ENCODE measurements at regions of chr11 and their contacts with region 1.

Region 1: DNA sequence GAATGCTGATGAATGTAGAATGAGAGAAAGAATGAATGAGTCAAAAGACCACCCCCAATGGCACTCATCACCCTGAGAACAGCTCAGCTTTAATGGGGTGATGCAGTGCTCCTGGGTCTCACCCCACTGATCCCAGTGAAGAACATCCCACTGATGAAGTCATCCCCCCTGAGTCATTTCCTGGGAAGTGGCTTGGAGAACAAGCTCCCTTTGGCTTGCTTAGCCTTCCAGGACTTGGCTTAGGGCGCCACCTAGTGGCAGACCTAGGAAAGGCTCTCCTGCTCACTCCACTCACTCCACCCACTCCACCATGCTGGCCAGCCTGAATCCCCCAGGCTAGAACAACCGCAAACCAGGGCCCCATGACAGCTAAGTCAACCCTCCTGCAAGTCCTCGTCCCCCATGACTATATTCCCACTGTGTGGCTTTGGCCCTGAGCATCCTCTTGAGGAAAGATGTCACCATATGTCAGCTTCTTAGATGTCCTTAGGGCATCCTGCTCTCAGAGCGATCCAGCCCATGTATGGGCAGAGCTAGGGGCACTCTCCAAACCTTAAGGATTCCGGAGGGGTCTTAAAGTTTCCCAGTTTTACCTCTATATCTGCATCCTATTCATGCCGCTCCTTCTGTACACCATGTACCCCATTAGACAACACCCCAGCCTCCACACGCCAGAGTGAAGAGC is 17.8 kb upstream of the TMPRSS13 start:
- DNase-seq: peak; percentile 57 to 86 (median 76)
- ATAC-seq: peak; percentile 64
- H3K4me3 ChIP-seq: no peak overlapping the region
- H3K4me3 Mint-ChIP-seq: peak overlapping the region in 9 of 10 donors; percentile 1 to 79 (median 58)
- H3K27ac ChIP-seq: no peak overlapping the region
- H3K27ac Mint-ChIP-seq: peak overlapping the region; percentile 30 to 91 (median 82)
- H3K4me1 ChIP-seq: peaks cover 49 to 51% of the 10 kb centered on the region in 2 donors
- H3K4me1 Mint-ChIP-seq: peaks cover 50 to 83% (median 60%) of the 10 kb centered on the region in 7 donors
- H3K27me3 ChIP-seq: no peaks in the 10 kb centered on the region
- H3K27me3 Mint-ChIP-seq: no peaks in the 10 kb centered on the region

Region 2: GRCh38 chr11:117426269-117426685 is 520.7 kb before region 1 on chr11:
- CTCF ChIA-PET with region 1: interaction called, 11 read pairs
- POLR2A ChIA-PET with region 1: no interaction called
- intact Hi-C with region 1: loop called in 1 of 2 experiments (anchors 10 kb)
- DNase-seq: peak; percentile 7 to 77 (median 48)
- ATAC-seq: peak; percentile 73
- H3K4me3 ChIP-seq: no peak overlapping the region
- H3K4me3 Mint-ChIP-seq: peak overlapping the region in 5 of 10 donors; percentile 20 to 53 (median 42)
- H3K27ac ChIP-seq: no peak overlapping the region
- H3K27ac Mint-ChIP-seq: no peak overlapping the region
- H3K4me1 ChIP-seq: no peaks in the 10 kb centered on the region
- H3K4me1 Mint-ChIP-seq: peaks cover 0 to 13% (median 10%) of the 10 kb centered on the region in 7 donors
- H3K27me3 ChIP-seq: no peaks in the 10 kb centered on the region
- H3K27me3 Mint-ChIP-seq: peaks cover 0 to 15% (median 3%) of the 10 kb centered on the region in 5 donors

Region 3: DNA sequence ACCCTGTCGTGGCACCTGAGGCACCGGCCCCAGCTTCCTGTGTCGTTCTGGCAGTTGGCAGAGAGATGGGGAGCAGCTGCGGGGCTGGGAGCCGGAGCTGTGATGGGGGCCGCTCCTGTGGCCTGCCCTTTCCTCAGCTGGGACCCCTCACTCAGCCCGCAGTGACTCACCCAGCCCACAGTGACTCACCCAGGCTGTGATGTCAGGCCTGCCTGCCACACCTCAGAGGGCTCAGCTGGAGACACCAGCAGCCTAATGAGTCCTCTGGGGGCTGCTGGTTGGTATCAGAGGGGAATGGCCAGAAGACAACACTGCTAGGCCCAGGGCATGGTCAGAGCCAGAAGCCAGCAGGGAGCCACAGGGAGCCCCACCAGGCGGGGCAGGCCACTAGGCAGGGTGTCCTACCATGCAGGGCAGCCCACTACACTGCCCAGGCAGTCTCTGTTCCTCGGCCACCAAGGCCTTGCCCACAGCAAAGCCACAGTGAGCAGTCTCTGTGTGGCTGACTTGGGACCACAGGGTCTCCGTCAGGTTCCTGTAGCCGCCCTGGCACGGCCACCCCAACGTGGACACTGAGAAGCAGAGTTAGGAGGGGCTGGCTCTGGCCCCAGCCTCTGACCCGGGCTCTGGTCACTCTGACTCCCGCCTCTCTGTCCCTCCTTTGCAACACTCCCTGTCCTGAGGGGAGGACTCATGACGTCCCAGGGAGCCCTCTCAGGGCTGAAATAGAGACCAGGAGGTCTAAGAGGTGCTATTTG is 118.2 kb before region 1 on chr11:
- CTCF ChIA-PET with region 1: interaction called, 138 read pairs
- POLR2A ChIA-PET with region 1: interaction called, 7 read pairs
- intact Hi-C with region 1: loop called (anchors 1 kb)
- DNase-seq: peak in 6 of 9 donors; percentile 19 to 82 (median 24)
- ATAC-seq: peak; percentile 88
- H3K4me3 ChIP-seq: no peak overlapping the region
- H3K4me3 Mint-ChIP-seq: peak overlapping the region in 7 of 10 donors; percentile 16 to 79 (median 48)
- H3K27ac ChIP-seq: peak overlapping the region; percentile 35
- H3K27ac Mint-ChIP-seq: peak overlapping the region in 6 of 9 donors; percentile 16 to 87 (median 60)
- H3K4me1 ChIP-seq: peaks cover 38 to 47% of the 10 kb centered on the region in 2 donors
- H3K4me1 Mint-ChIP-seq: peaks cover 48 to 72% (median 50%) of the 10 kb centered on the region in 7 donors
- H3K27me3 ChIP-seq: no peaks in the 10 kb centered on the region
- H3K27me3 Mint-ChIP-seq: peaks cover 0 to 2% (median 0%) of the 10 kb centered on the region in 5 donors

Region 4: DNA sequence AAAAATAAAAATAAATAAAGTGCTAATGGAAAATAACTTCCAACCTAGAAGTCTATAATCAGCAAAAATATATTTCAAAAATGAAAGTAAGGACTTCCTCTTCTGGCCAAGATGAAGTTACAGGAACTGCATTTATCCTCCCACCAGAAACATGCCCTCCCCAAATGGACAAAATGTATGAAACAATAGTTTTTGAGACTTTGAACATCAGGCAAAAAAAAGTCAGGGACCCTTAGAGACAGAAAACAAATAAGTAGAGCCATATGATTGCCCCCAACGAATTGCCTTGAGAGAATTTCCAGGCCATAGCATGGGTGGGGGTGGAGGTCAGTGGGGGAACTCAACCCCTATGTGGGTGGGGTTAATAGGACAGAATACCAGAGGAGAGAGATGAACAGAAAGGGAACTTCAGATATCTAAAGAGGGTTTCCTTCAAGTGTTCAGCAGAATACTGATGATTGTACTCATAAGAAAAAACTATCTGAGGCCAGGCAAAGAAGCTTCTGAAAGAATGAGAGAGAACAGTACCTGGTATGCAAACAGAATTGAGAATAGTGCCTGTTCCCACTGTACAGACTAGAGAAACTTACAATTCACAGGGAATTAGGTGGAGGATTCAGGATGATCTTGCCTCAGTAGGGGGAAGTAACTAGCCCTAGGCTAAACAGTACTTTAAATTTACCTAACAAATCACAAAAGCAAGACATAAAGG is 12.6 kb after region 1 on chr11:
- CTCF ChIA-PET with region 1: interaction called, 6 read pairs
- POLR2A ChIA-PET with region 1: interaction called, 15 read pairs
- intact Hi-C with region 1: loop called in 1 of 2 experiments (anchors 1 kb)
- DNase-seq: no peak
- ATAC-seq: no peak
- H3K4me3 ChIP-seq: no peak overlapping the region
- H3K4me3 Mint-ChIP-seq: peak overlapping the region in 4 of 10 donors; percentile 12 to 67 (median 42)
- H3K27ac ChIP-seq: no peak overlapping the region
- H3K27ac Mint-ChIP-seq: peak overlapping the region in 3 of 9 donors; percentile 38 to 85 (median 84)
- H3K4me1 ChIP-seq: peaks cover 9 to 10% of the 10 kb centered on the region in 2 donors
- H3K4me1 Mint-ChIP-seq: peaks cover 31 to 76% (median 71%) of the 10 kb centered on the region in 7 donors
- H3K27me3 ChIP-seq: no peaks in the 10 kb centered on the region
- H3K27me3 Mint-ChIP-seq: no peaks in the 10 kb centered on the region

Region 5: DNA sequence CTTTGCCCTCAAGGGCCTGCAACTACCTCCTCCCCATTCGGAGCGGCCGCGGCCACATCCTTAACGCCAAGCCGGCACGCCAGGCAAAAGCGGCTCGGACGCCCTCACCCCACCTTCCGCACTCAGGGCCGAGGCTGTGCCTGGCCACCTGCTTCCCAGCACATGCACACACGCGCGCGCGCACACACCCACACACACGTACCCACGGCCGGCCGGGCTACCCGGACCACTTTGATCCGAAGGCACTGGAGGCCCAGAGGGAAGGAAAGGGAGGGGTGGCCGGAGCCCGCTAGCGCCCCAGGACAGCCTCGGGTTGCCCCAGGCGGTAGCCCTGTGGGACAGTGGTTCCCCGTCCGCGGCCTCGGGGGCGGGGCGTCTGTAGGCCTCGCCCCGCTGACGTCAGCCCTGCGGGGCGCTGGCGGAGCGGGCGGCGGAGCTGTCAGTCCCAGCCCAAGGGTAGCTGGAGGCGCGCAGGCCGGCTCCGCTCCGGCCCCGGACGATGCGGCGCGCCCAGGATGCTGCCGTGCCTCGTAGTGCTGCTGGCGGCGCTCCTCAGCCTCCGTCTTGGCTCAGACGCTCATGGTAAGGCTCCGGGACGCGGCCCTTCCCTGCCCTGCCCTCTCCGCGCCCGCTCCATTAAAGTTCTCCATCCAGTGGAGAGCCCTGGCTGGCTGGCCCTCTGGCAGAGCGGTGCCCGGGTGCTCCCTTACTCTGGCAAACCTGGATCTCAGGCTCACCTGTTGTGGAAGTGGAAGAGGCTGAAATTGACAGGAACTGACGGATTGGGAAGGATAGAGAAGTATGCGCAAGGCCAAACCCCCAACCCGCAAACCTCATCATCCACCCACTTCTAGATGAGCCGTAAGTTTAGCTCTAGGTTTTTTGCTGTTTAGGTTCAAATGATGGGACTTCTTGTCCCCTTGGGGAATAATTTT is 39.2 kb after region 1 on chr11 and contains the start of gene IL10RA:
- CTCF ChIA-PET with region 1: interaction called, 70 read pairs
- POLR2A ChIA-PET with region 1: interaction called, 302 read pairs
- intact Hi-C with region 1: loop called (anchors 1 kb)
- DNase-seq: peak; percentile 72 to 95 (median 80)
- ATAC-seq: peak; percentile 92
- H3K4me3 ChIP-seq: peak within 1 kb of the TSS; percentile 97
- H3K4me3 Mint-ChIP-seq: peak within 1 kb of the TSS; percentile 84 to 97 (median 91)
- H3K27ac ChIP-seq: peak within 1 kb of the TSS; percentile 91
- H3K27ac Mint-ChIP-seq: peak within 1 kb of the TSS; percentile 87 to 98 (median 92)
- H3K4me1 ChIP-seq: peaks cover 43 to 45% of the 10 kb centered on the region in 2 donors
- H3K4me1 Mint-ChIP-seq: peaks cover 44 to 78% (median 69%) of the 10 kb centered on the region in 7 donors
- H3K27me3 ChIP-seq: no peaks in the 10 kb centered on the region
- H3K27me3 Mint-ChIP-seq: no peaks in the 10 kb centered on the region
- total RNA-seq, gene IL10RA: 154 to 300 (median 184) TPM

Region 6: DNA sequence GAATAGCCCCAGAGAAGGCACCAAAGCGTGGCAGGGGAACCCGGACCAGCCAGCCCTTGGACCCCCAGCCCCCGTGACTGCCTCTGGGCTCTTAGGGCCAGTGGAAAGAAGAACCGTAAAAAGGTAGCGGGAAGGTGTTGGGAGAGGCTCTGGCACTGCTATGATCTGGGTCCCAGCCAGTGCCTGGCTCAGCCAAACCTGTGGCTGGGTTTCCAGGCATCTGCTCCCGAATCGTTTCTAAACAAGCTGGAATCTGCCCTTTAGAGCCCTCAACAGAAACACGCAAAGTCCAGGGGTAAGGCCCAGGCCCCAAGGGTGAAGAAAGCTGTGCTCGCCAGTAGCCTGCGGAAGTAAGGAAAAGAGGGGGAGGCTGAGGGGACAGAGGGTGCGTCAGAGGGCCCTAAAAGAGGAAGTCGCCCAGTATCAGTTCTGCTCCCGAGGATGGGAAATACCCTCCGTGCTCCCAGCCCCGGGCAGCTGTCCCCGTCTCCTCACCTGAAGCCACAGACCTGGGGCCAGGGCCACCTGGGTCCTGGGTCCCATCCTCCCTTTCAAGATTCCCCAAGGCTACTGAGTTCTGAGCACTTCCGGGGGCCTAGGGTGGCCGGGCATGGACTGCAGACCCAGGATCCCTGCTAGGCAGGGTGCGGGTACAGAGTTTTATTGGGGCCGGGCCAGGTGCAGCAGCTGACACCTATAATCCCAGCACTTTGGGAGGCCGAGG is 63.9 kb after region 1 on chr11:
- CTCF ChIA-PET with region 1: interaction called, 12 read pairs
- POLR2A ChIA-PET with region 1: interaction called, 14 read pairs
- intact Hi-C with region 1: loop called in 1 of 2 experiments (anchors 1 kb)
- DNase-seq: no peak
- ATAC-seq: peak; percentile 76
- H3K4me3 ChIP-seq: no peak overlapping the region
- H3K4me3 Mint-ChIP-seq: peak overlapping the region in 1 of 10 donors; percentile 56
- H3K27ac ChIP-seq: no peak overlapping the region
- H3K27ac Mint-ChIP-seq: peak overlapping the region in 4 of 9 donors; percentile 9 to 92 (median 52)
- H3K4me1 ChIP-seq: peaks cover 72 to 98% of the 10 kb centered on the region in 2 donors
- H3K4me1 Mint-ChIP-seq: peaks cover 82 to 93% (median 85%) of the 10 kb centered on the region in 7 donors
- H3K27me3 ChIP-seq: no peaks in the 10 kb centered on the region
- H3K27me3 Mint-ChIP-seq: no peaks in the 10 kb centered on the region

Region 7: GRCh38 chr11:118051611-118052461 is 104.9 kb after region 1 on chr11:
- CTCF ChIA-PET with region 1: interaction called, 125 read pairs
- POLR2A ChIA-PET with region 1: interaction called, 146 read pairs
- intact Hi-C with region 1: loop called (anchors 1 kb)
- DNase-seq: peak in 8 of 9 donors; percentile 34 to 91 (median 88)
- ATAC-seq: peak; percentile 98
- H3K4me3 ChIP-seq: peak overlapping the region; percentile 29
- H3K4me3 Mint-ChIP-seq: peak overlapping the region; percentile 74 to 94 (median 80)
- H3K27ac ChIP-seq: peak overlapping the region; percentile 65
- H3K27ac Mint-ChIP-seq: peak overlapping the region; percentile 94 to 100 (median 96)
- H3K4me1 ChIP-seq: peaks cover 60 to 65% of the 10 kb centered on the region in 2 donors
- H3K4me1 Mint-ChIP-seq: peaks cover 45 to 64% (median 57%) of the 10 kb centered on the region in 7 donors
- H3K27me3 ChIP-seq: no peaks in the 10 kb centered on the region
- H3K27me3 Mint-ChIP-seq: no peaks in the 10 kb centered on the region

Measured in naive thymus-derived CD4-positive, alpha-beta T cell (primary cell).